Gastrocnemius medialis (tissue), 4 donors: ENCODE measurements at regions of chr6 and their contacts with region 1.

Region 1: GRCh38 chr6:124999105-124999764 is 37.0 kb downstream of the RNF217 start:
- DNase-seq: peak; percentile 57 to 59
- ATAC-seq: peak; percentile 84 to 85
- H3K4me3 ChIP-seq: no peak overlapping the region
- H3K27ac ChIP-seq: peak overlapping the region; percentile 56 to 81 (median 70)
- H3K4me1 ChIP-seq: peaks cover 80 to 92% of the 10 kb centered on the region in 2 donors
- H3K27me3 ChIP-seq: no peaks in the 10 kb centered on the region
- CTCF ChIP-seq: no peak
- POLR2A ChIP-seq: no peak

Region 2: DNA sequence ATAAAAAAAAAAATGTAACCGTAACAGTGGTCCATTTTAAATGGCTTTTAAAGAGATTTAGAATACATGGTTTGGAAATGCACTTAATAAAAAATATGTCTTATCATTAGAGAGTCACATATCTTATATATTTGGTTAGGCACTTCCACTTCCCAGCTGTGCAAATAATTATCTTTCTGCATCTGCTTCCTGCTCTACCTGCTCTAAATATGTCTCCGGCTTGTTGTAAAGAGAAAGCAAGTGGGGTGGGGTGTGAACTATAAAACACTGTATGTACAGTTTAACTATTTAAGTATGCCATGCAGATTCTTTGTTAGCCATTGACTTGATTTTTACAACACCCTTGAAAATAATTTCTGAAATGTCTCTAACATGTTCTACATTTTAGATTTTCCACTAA is 1089.2 kb before region 1 on chr6:
- in situ Hi-C with region 1: no loop called
- intact Hi-C with region 1: no loop called
- DNase-seq: no peak
- ATAC-seq: no peak
- H3K4me3 ChIP-seq: no peak overlapping the region
- H3K27ac ChIP-seq: no peak overlapping the region
- H3K4me1 ChIP-seq: no peaks in the 10 kb centered on the region
- H3K27me3 ChIP-seq: no peaks in the 10 kb centered on the region
- CTCF ChIP-seq: no peak
- POLR2A ChIP-seq: no peak

Region 3: DNA sequence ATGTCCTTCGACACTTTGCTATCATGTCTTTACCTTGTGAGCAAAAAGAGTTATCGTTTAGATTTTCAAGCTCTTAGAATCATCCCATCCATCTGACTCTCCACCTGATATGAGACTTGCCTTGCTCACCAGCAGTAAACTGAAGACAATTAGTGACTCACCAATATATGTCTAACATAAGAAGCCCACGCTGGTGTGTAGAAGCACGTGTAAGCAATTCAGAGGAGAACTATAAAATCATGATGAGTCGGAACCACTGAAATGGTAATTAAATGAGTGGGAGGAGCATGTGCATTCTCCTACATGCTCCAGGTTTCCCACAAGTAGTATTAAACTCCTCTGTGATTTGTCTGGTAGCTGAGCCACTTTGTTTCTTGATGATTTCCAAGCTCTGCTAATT is 218.6 kb before region 1 on chr6:
- in situ Hi-C with region 1: no loop called
- intact Hi-C with region 1: no loop called
- DNase-seq: no peak
- ATAC-seq: no peak
- H3K4me3 ChIP-seq: no peak overlapping the region
- H3K27ac ChIP-seq: no peak overlapping the region
- H3K4me1 ChIP-seq: no peaks in the 10 kb centered on the region
- H3K27me3 ChIP-seq: no peaks in the 10 kb centered on the region
- CTCF ChIP-seq: no peak
- POLR2A ChIP-seq: no peak

Region 4: GRCh38 chr6:124961777-124962611 is 37.2 kb before region 1 on chr6 and contains the start of gene RNF217:
- in situ Hi-C with region 1: no loop called
- intact Hi-C with region 1: loop called (anchors 2 kb)
- DNase-seq: peak; percentile 29 to 59
- ATAC-seq: peak; percentile 34 to 39
- H3K4me3 ChIP-seq: peak within 1 kb of the TSS; percentile 72 to 87 (median 81)
- H3K27ac ChIP-seq: peak within 1 kb of the TSS; percentile 83 to 92 (median 90)
- H3K4me1 ChIP-seq: peaks cover 34 to 43% of the 10 kb centered on the region in 2 donors
- H3K27me3 ChIP-seq: no peaks in the 10 kb centered on the region
- CTCF ChIP-seq: peak in 1 of 5 experiments; percentile 10
- POLR2A ChIP-seq: peak; percentile 50 to 54
- total RNA-seq, gene RNF217: 4.5 to 15.5 (median 12.4) TPM

Region 5: DNA sequence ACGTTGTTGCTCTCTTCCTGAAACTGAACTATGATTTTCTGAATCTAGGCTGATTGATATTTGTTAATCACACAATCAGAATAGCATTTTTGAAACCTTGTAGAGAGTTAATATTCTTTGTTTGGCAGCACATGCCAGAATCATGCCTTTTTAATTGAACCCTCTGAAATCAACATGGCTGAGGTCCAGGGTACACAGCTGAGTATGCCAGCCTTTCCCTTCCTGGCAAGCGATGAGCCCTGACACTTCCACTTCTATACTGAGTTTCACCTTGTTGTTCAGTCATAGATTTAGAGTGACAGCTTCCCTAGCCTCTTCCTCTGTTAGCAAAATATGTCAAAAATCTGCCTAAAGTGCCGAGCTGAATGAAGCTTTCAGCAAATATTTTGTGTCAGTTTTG is 295.7 kb after region 1 on chr6:
- in situ Hi-C with region 1: loop called in 1 of 4 experiments (anchors 25 kb)
- intact Hi-C with region 1: no loop called
- DNase-seq: no peak
- ATAC-seq: peak; percentile 64 to 72
- H3K4me3 ChIP-seq: no peak overlapping the region
- H3K27ac ChIP-seq: peak overlapping the region; percentile 32 to 66 (median 44)
- H3K4me1 ChIP-seq: peaks cover 34 to 51% of the 10 kb centered on the region in 2 donors
- H3K27me3 ChIP-seq: no peaks in the 10 kb centered on the region
- CTCF ChIP-seq: no peak
- POLR2A ChIP-seq: no peak